MCF 10A (cell line): ENCODE measurements at regions of chr2 and their contacts with region 1.

Region 1: DNA sequence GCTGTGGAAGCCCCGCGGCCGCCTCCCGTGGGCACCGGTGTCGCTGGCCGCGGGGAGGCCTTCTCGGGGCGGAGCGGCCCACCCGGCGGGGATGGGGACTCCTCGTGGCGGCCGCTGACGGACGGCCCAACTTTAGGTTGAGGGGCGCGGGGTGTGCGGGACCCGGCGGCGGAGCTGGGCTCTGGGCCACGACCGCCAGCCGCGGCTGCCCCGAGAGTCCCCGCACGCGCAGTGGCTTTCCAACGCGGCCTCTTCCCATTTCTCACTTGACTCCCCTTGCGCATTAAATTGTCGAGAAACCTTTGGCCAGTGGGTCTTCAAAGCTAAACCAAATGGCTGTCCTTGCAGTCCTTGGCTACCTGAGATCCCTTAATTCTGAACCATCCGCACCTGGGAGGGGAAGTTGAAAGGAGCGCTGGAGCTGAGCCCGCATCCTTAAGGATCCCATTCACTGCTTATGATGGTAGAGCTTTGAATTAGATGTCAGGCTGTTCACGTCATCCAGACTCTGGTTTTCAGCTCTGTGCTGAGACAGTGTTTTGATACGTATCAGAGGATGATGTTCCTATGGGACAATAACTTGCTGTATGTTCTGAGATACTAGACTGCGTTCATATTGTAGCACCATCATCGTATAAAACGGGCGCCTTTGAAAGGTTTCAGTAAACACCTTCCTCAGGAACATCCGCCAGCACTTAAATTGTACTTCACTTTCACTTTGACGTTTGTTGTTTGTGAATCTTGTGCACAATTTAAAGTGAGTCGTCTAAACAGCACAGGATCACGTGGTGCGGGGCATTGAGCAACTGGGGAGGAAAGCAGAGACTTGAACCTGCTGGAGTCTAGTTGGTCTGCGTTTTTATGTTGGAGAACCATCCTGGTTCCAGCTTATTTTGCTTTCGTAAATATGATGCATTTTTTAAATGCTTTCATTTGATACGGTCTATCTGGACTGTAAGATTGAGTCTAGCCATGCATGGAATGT is 874 bp downstream of the CLIP4 start:
- DNase-seq: peak; percentile 87
- H3K4me3 Mint-ChIP-seq: peak overlapping the region; percentile 90
- H3K27ac Mint-ChIP-seq: peak overlapping the region; percentile 49
- H3K4me1 Mint-ChIP-seq: peaks cover 40% of the 10 kb centered on the region
- H3K27me3 Mint-ChIP-seq: no peaks in the 10 kb centered on the region
- CTCF ChIP-seq: no peak

Region 2: GRCh38 chr2:28870146-28870891 is 245.8 kb before region 1 on chr2 and contains the start of gene TRMT61B:
- CTCF ChIA-PET with region 1: no interaction called
- POLR2A ChIA-PET with region 1: no interaction called
- intact Hi-C with region 1: no loop called
- DNase-seq: peak; percentile 93
- H3K4me3 Mint-ChIP-seq: peak within 1 kb of the TSS; percentile 92
- H3K27ac Mint-ChIP-seq: peak within 1 kb of the TSS; percentile 79
- H3K4me1 Mint-ChIP-seq: peaks cover 9% of the 10 kb centered on the region
- H3K27me3 Mint-ChIP-seq: no peaks in the 10 kb centered on the region
- CTCF ChIP-seq: no peak
- total RNA-seq, gene TRMT61B: 10.4 and 13.4 TPM in 2 replicates

Region 3: GRCh38 chr2:28997237-28997846 is 118.7 kb before region 1 on chr2:
- CTCF ChIA-PET with region 1: no interaction called
- POLR2A ChIA-PET with region 1: no interaction called
- intact Hi-C with region 1: no loop called
- DNase-seq: no peak
- H3K4me3 Mint-ChIP-seq: no peak overlapping the region
- H3K27ac Mint-ChIP-seq: no peak overlapping the region
- H3K4me1 Mint-ChIP-seq: peaks cover 22% of the 10 kb centered on the region
- H3K27me3 Mint-ChIP-seq: no peaks in the 10 kb centered on the region
- CTCF ChIP-seq: no peak

Region 4: DNA sequence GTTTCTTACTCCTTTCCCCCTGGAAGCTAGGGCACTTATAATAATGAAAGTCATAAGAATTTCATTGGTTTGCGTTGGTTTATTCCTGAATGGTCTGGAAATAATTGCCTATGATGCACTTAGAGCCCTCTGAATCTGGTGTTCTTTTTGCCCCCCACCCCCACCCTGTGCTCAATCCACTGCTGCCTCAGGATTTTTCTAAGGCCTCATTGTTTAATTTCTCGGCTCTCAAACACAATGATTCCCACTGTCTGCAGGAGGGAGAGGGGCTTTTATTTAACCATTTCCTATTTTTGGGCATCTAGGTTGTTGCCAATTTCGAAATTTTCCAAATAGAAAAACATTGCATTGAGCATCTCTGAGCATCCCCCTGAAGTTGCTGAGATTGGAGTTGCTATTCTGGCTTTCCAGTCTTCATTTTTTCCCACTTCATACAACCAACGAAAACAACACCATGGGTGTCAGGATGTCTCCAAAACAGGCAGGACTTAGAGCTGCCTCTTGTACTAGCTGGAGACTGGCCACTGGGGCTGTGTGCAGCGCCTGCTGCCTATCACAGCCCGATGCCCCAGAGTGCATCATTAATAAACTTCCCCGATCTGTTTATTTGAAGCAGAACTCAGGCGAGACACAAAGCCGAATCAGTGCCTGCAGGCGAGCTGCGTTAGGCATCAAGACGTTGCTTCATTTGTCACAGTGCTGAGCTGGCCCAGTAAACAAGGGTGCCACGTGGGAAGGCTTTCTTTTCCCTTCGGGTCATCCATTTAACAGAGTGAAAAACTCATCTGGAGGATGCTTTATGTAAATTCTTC is 40.0 kb before region 1 on chr2:
- CTCF ChIA-PET with region 1: no interaction called
- POLR2A ChIA-PET with region 1: interaction called, 230 read pairs
- intact Hi-C with region 1: no loop called
- DNase-seq: no peak
- H3K4me3 Mint-ChIP-seq: no peak overlapping the region
- H3K27ac Mint-ChIP-seq: no peak overlapping the region
- H3K4me1 Mint-ChIP-seq: peaks cover under 1% of the 10 kb centered on the region
- H3K27me3 Mint-ChIP-seq: no peaks in the 10 kb centered on the region
- CTCF ChIP-seq: no peak

Region 5: DNA sequence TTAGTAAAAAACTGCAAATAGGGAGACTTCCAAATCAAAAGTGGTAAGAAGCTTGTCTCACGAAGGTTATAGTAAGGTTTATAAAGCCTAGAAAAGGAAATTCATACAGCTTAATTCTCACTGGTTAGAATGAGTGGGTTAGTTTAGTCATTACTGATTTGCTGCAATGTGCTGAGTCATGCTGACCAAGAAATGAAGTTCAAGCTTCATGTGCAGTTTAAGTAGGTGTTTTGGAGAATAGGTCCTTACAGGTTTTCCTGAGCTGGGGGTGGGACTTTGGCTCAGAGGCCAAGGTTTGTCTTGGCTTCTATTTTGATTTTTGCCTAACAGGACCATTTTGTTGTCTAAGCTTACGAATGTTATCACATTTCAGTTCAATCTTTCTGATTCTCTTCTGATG is 14.2 kb after region 1 on chr2:
- CTCF ChIA-PET with region 1: interaction called, 10 read pairs
- POLR2A ChIA-PET with region 1: interaction called, 171 read pairs
- intact Hi-C with region 1: no loop called
- DNase-seq: peak; percentile 93
- H3K4me3 Mint-ChIP-seq: peak overlapping the region; percentile 46
- H3K27ac Mint-ChIP-seq: peak overlapping the region; percentile 63
- H3K4me1 Mint-ChIP-seq: peaks cover 25% of the 10 kb centered on the region
- H3K27me3 Mint-ChIP-seq: no peaks in the 10 kb centered on the region
- CTCF ChIP-seq: no peak

Region 6: DNA sequence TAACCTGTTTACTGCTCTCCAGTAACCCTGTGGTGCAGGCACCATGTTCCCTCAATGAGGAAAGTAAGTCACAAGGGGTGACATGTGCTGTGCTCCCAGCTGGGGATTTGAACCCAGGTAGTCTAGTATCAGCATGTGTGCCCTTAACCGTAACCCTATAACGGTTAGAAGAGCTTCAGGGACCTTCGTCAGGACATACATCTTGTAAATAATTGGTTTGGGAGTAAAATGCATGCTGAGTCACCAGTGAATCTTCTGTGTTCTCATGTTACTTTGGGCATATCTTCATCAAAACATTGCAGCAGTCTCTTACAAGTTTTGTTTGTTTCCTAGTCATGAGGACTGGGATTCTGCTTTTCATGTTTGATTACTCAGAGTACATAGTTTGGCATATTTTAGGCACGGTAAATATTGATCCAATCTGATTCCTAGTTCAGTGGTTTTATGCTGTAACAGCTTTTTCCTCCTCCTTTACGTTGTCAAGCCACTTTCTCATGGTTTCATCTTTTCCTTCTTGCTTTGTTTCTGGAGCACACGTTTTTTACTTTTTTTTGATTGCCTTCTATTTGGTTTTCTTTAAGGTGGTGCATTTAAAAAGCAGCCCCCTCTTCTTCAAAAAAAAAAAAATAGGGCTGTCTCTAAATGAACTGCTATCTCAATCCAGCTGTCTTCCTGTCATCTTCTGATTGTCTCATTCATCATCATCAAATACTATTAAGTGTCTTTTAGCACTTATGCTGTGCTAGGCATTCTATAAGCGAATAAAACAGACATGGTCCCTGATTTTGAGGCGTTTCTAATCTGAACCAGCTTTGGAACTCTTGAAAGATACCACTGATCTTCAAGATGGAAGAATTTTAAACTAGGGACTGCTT is 49.5 kb after region 1 on chr2:
- CTCF ChIA-PET with region 1: no interaction called
- POLR2A ChIA-PET with region 1: interaction called, 11 read pairs
- intact Hi-C with region 1: no loop called
- DNase-seq: peak; percentile 76
- H3K4me3 Mint-ChIP-seq: peak overlapping the region; percentile 1
- H3K27ac Mint-ChIP-seq: peak overlapping the region; percentile 23
- H3K4me1 Mint-ChIP-seq: peaks cover 17% of the 10 kb centered on the region
- H3K27me3 Mint-ChIP-seq: no peaks in the 10 kb centered on the region
- CTCF ChIP-seq: no peak